PC-9 (cell line): ENCODE measurements at regions of chr4 and their contacts with region 1.

Region 1: GRCh38 chr4:41214136-41214824 is at the start of gene APBB2:
- DNase-seq: peak; percentile 89 to 95
- H3K4me3 ChIP-seq: peak within 1 kb of the TSS; percentile 86
- H3K27ac ChIP-seq: peak within 1 kb of the TSS; percentile 38; the same call in 1 of the 2 replicates
- H3K4me1 ChIP-seq: peaks cover 30% of the 10 kb centered on the region
- H3K27me3 ChIP-seq: no peaks in the 10 kb centered on the region
- CTCF ChIP-seq: peak; percentile 77
- total RNA-seq, gene APBB2: 33.6 and 46.0 TPM in 2 replicates

Region 2: DNA sequence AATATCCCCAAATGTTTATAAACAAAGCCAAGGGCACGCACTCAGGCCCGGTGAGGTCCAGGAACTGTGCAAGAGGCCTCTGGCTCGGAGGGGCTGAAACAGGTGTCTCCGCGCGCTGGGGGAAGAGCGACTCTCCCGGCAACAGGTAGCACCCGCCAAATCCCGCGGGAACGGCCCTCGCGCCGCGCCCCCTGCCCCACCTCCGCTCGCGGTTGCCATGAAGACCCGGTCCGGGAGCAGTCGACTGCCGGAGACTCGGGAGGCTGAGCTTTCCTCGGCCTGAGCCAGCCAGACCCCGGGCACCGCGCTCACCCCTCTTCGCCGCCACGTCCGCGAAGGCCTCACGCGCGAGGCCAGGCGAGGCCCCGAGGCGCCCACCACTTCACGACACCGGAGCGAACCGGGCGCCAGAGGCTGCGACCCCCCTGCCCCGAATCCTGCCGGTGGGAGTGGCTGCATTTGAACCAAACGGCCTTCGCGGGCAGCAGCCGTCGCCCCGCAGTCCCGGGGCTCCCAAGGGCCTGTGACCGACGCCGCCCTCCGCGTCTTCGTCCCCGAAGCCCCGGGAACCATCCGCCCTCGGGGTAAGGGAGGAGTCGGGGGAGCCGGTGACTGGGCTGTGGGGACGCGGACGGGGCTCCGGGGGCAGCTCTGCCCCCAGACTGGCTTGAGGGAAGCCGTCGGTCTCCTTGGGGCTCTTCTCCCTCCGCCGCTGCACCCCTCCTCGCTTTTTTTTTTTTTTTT is 464.4 kb before region 1 on chr4 and contains the start of gene NSUN7:
- CTCF ChIA-PET with region 1: no interaction called
- POLR2A ChIA-PET with region 1: no interaction called
- intact Hi-C with region 1: loop called (anchors 5 kb)
- DNase-seq: peak; percentile 82 to 90
- H3K4me3 ChIP-seq: peak within 1 kb of the TSS; percentile 79
- H3K27ac ChIP-seq: peak within 1 kb of the TSS; percentile 55
- H3K4me1 ChIP-seq: peaks cover 18% of the 10 kb centered on the region
- H3K27me3 ChIP-seq: no peaks in the 10 kb centered on the region
- CTCF ChIP-seq: no peak
- total RNA-seq, gene NSUN7: 16.8 and 18.5 TPM in 2 replicates

Region 3: GRCh38 chr4:40924096-40924792 is 290.0 kb before region 1 on chr4:
- CTCF ChIA-PET with region 1: interaction called, 4 read pairs
- POLR2A ChIA-PET with region 1: no interaction called
- intact Hi-C with region 1: loop called (anchors 1 kb)
- DNase-seq: peak in 1 of 2 experiments; percentile 68
- H3K4me3 ChIP-seq: no peak overlapping the region
- H3K27ac ChIP-seq: no peak overlapping the region
- H3K4me1 ChIP-seq: no peaks in the 10 kb centered on the region
- H3K27me3 ChIP-seq: no peaks in the 10 kb centered on the region
- CTCF ChIP-seq: peak; percentile 94

Region 4: DNA sequence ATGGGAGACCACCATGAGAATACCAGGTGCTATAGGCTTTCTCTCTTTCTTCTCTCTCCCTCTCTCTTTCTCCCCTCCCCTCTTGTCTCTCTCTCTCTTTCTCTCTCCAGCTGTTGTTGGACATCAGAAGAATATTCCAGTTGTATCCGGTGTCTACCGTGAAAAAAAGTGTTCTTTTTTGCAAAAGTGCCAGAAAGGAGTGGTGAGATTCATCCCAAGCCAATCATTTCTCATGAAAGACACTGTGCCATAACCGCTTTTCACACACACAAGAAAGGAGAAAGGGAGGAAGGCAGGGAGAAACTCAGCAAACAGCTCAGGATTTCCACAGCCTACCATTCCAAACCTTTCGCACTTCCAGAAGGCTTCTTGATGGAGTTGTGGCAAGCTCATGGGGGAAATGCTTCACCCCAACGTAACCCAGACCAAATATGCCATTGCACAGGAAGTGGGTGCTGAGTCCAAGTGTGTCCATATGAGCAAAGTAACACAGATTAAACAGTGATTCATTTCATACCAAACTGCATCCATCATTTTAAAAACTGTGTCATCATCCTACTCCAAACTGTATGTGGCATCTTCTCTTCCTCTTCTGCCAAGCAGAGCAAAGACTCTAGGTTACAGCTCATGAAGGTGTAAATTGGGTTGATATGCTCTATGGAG is 223.9 kb before region 1 on chr4:
- CTCF ChIA-PET with region 1: interaction called, 14 read pairs
- POLR2A ChIA-PET with region 1: no interaction called
- intact Hi-C with region 1: no loop called
- DNase-seq: peak; percentile 45 to 85
- H3K4me3 ChIP-seq: no peak overlapping the region
- H3K27ac ChIP-seq: peak overlapping the region; percentile 92
- H3K4me1 ChIP-seq: peaks cover 39% of the 10 kb centered on the region
- H3K27me3 ChIP-seq: no peaks in the 10 kb centered on the region
- CTCF ChIP-seq: no peak

Region 5: GRCh38 chr4:41160012-41160789 is 54.1 kb before region 1 on chr4:
- CTCF ChIA-PET with region 1: interaction called, 4 read pairs
- POLR2A ChIA-PET with region 1: interaction called, 3 read pairs
- intact Hi-C with region 1: loop called (anchors 2 kb)
- DNase-seq: peak; percentile 83 to 85
- H3K4me3 ChIP-seq: no peak overlapping the region; the same call in 1 of the 2 replicates
- H3K27ac ChIP-seq: peak overlapping the region; percentile 80
- H3K4me1 ChIP-seq: peaks cover 27% of the 10 kb centered on the region
- H3K27me3 ChIP-seq: no peaks in the 10 kb centered on the region
- CTCF ChIP-seq: no peak

Region 6: GRCh38 chr4:41257257-41257901 is 43.1 kb after region 1 on chr4:
- CTCF ChIA-PET with region 1: interaction called, 4 read pairs
- POLR2A ChIA-PET with region 1: interaction called, 5 read pairs
- intact Hi-C with region 1: loop called (anchors 1 kb)
- DNase-seq: peak; percentile 58 to 88
- H3K4me3 ChIP-seq: peak overlapping the region; percentile 99
- H3K27ac ChIP-seq: peak overlapping the region; percentile 90
- H3K4me1 ChIP-seq: peaks cover 33% of the 10 kb centered on the region
- H3K27me3 ChIP-seq: no peaks in the 10 kb centered on the region
- CTCF ChIP-seq: no peak

Region 7: DNA sequence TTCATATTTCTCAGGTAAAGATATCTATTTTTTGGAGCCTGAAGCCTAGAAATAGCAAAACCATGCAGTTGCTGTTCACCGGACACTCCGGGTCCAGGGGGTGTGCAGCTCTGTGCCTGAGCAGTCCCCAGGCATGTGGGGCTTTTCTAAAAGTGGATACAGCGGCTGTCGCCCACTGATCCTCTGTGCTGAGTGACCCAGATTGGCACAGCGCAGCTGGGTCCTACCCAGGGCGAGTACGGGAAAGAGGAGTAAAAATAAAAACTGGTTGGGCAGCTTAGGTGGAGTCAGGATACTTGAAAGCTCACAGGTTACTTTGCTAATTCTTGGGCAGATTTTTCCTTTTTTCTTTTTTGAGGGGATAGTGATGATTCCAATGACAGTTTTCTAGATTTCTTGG is 161.3 kb after region 1 on chr4:
- CTCF ChIA-PET with region 1: no interaction called
- POLR2A ChIA-PET with region 1: no interaction called
- intact Hi-C with region 1: no loop called
- DNase-seq: no peak
- H3K4me3 ChIP-seq: no peak overlapping the region
- H3K27ac ChIP-seq: 0 out of 2 replicates have a peak overlapping the region, but pooled peaks have one; percentile 3
- H3K4me1 ChIP-seq: peaks cover 17% of the 10 kb centered on the region
- H3K27me3 ChIP-seq: no peaks in the 10 kb centered on the region
- CTCF ChIP-seq: no peak